GM10248 (cell line): ENCODE measurements at regions of chr11 and their contacts with region 1.

Region 1: GRCh38 chr11:1852877-1853276 is at the start of gene LSP1:
- DNase-seq: peak; percentile 93
- CTCF ChIP-seq: no peak

Region 2: DNA sequence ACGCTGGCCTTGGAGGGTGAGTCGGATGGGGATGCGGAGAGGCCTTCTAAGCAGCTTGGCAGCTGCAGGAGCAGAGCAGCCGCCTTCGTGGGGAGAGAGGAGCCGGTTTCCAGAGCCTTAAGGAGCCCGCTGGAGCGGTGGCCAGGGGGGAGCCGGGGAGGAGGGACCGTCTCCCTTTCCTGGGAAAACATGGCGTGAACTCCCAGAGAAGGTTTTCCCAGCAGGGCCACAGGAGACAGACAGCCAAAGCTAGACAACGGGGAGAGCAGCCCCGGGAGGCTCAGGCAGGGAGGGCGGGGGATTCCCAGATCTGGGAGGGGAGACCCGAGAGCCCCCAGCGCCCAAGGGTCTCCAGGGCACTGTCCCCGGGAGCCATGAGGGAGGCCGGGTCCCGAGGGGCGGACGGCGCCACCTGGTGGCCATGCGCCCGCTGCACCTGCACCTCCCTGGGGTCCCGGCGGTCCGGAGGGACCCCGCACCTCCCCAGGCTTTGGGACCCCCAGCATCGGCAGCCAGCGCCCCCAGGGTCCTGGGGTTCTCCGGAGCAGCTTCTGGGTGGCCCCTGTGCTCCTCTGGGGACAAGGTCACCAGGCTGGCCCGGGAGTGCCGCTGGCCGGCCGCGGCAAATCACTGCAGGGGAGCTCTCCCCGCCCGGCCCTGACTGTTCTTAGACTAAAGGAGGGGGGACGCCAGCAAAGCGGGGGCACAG is 20.5 kb before region 1 on chr11:
- CTCF ChIA-PET with region 1: interaction called, 29 read pairs
- POLR2A ChIA-PET with region 1: no interaction called
- DNase-seq: peak; percentile 87
- CTCF ChIP-seq: peak; percentile 83

Region 3: DNA sequence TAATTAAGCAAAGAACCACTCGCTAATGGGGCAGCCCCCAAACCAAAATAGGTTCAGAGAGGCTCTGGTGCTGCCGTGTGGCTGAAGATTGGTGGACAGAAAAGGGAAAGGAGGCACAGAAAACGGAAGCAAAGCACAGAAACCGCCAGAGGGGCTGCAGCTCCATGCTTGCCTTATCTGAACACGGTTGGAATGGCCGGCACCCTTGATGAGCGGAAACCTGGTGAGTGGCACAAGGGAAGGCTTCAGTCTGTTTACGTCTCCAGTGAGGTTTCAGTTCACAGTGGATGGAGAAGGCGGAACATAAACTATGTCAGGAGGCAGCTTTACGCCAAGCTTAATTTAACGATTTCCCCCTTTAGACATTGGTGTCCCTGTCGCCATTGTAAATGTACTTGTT is 44.0 kb after region 1 on chr11:
- CTCF ChIA-PET with region 1: interaction called, 10 read pairs
- POLR2A ChIA-PET with region 1: no interaction called
- DNase-seq: peak; percentile 66
- CTCF ChIP-seq: peak; percentile 37

Region 4: GRCh38 chr11:2071748-2072385 is 219.0 kb after region 1 on chr11:
- CTCF ChIA-PET with region 1: no interaction called
- POLR2A ChIA-PET with region 1: no interaction called
- DNase-seq: no peak
- CTCF ChIP-seq: no peak

Region 5: DNA sequence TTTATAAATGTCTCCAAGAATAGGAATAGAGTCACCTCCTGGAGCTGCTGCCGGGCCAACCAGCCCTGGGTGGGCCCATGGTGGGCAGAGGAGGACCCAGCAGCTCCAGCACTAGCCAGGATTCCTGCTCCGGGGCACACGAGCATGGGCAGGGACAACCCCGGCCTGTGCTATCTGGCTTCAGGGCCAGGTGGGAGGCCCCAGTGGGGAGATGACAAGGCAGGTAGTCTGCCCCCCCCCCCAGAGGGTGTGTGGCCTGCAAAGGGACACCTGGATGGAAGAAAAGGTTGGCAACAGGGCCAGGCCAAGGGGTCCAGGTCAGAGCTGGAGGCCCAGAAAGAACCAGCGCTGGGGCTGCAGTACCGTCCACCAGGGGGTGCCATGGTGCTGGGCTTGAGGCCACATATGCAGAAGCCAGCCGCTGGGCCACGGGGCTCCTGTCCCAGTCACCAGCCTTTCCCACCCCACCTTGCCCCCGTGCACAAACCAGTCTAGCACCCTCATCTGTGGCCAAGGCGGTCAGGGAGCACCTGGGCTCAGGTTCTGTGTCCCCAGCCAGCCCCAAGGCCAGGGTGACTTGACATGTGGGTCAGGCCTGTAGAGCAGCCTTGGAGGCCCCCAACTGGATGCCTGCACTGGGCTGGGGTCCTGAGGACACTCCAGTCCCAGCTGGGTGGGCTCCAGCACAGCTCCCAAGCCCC is 452.4 kb after region 1 on chr11:
- CTCF ChIA-PET with region 1: no interaction called
- POLR2A ChIA-PET with region 1: no interaction called
- DNase-seq: peak; percentile 83
- CTCF ChIP-seq: peak; percentile 90